Naive thymus-derived CD8-positive, alpha-beta T cell (primary cell): ENCODE measurements at regions of chr12 and their contacts with region 1.

Region 1: DNA sequence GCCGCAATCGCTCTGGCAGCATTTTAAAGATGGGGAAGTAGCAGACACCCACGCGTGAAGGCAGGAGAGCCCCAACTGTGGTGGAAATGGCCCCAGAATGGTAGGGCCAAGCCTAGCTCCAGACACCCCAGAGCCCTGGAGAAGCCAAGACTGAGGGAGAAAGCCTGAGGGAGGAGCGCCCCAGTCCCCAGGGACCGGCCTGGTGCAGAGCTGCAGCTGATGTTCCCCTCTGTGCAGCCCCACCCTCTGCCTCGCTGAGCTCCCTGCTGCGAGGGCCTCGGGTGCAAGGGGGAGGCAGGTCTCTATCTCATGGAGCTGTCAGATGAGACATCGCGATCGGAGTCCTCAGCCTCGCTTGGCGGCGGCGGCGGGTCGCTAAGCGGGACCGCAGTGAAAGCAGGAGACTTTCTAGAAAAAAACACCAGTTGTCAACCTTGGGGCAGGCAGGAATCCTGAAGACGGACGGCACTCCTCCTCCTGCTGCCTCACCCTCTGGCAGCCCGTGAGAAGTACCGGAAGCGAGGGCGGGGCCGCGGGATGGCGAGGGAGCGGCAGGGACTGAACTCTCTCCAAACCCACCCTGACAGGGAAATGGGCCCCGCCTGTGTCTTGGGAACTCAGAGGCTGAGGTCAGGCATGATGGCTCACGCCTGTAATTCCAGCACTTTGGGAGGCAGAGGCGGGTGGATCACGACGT is 6.0 kb downstream of the GAPDH start:
- DNase-seq: peak in 5 of 10 donors; percentile 21 to 63 (median 41)
- ATAC-seq: peak; percentile 48 to 51
- H3K4me3 Mint-ChIP-seq: peak overlapping the region; percentile 65 to 86 (median 80)
- H3K27ac Mint-ChIP-seq: peak overlapping the region; percentile 66 to 93 (median 76)
- H3K4me1 Mint-ChIP-seq: peaks cover 14 to 55% (median 44%) of the 10 kb centered on the region in 4 donors
- H3K27me3 Mint-ChIP-seq: no peaks in the 10 kb centered on the region

Region 2: DNA sequence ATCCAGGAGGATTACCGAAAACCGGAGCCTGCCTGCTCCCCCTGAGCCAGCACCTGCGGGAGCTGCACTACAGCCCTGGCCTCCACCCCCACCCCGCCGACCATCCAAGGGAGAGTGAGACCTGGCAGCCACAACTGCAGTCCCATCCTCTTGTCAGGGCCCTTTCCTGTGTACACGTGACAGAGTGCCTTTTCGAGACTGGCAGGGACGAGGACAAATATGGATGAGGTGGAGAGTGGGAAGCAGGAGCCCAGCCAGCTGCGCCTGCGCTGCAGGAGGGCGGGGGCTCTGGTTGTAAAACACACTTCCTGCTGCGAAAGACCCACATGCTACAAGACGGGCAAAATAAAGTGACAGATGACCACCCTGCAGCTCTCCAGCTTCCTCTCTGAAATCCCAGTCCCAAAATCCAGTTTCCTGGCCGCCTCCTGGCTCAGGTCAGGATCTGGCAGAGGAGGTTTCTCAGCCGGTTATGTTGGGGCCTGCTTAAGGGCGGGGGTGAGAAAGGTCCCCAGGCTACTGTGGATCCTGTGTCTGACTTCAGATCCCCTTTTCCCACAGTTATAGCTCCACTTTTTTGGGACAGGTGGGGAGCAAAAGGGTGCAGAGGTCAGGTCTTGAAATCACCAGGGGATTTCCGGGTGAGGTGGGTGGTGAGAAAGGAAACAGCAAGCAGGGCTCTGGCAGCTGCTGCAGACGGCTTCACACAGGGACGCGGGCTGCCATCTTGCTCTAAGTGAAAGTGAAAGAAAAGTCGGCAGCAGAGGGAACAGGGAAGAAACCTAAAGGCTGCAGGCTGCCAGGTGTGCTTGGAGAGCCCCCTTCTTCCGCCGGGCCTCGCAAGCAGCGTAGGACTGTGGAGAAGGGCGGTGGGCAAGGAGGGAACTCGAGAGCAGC is 88.7 kb before region 1 on chr12 and contains the start of gene TAPBPL:
- POLR2A ChIA-PET with region 1: interaction called, 64 read pairs
- DNase-seq: peak; percentile 65 to 90 (median 83)
- ATAC-seq: peak; percentile 86 to 95
- H3K4me3 Mint-ChIP-seq: peak within 1 kb of the TSS; percentile 95 to 100 (median 98)
- H3K27ac Mint-ChIP-seq: peak within 1 kb of the TSS; percentile 95 to 100 (median 100)
- H3K4me1 Mint-ChIP-seq: peaks cover 46 to 79% (median 75%) of the 10 kb centered on the region in 4 donors
- H3K27me3 Mint-ChIP-seq: no peaks in the 10 kb centered on the region
- polyA plus RNA-seq, gene TAPBPL: 46.0 to 126 (median 106) TPM

Region 3: GRCh38 chr12:6554168-6555017 is 14.1 kb after region 1 on chr12:
- POLR2A ChIA-PET with region 1: interaction called, 11 read pairs
- DNase-seq: peak; percentile 38 to 82 (median 58)
- ATAC-seq: peak; percentile 45 to 60
- H3K4me3 Mint-ChIP-seq: peak overlapping the region; percentile 77 to 93 (median 86)
- H3K27ac Mint-ChIP-seq: peak overlapping the region in 9 of 10 donors; percentile 8 to 91 (median 70)
- H3K4me1 Mint-ChIP-seq: peaks cover 34 to 54% (median 49%) of the 10 kb centered on the region in 4 donors
- H3K27me3 Mint-ChIP-seq: no peaks in the 10 kb centered on the region